Activated CD4-positive, alpha-beta T cell treated with anti-CD3 and anti-CD28 coated beads, Interleukin-2, amount 10 ng/mL, durations not matched to agents 7 days and 5 days (primary cell): ENCODE measurements at regions of chr18 and their contacts with region 1.

Region 1: DNA sequence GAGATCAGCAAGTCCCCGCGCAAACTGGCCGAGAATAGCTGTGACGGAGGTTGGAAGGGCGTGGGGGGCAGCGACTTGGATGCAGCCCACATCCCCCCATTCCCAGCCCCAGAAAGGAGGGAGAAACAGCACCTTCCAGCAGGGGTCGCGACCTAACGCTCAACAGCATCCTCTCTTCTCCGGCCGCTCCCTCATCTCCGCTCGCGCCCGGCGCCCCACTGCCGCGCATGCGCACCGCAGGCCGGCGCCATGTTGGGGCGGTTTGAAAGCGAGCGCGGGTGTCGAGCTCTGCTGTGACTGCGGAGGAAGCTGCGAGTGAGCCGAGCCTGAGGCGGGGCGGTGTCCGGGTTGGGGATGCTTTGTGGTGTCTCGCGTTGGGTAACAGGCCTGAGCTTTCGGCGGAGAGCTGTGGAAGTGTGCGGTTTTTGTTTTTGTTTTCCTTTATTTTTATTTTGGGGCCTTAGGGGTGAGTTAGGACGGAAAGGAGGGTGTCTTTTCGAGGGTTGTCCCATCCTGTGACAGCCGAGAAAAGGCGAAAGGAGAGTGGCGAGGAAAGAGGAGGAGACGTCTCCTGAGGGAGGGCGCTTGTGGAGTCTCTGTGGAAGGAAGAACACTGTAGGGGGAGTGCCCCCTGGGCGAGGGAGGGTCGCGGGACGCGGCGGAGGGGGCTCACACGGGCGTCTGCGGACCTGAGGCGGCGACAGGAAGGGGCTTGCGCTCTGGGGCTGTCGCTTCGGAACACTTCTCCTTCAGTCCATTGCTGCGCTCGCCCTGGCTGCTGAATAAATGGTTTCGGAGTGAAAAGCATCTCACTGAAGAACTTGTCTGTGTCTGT is at the starts of genes C18orf54 and STARD6:
- DNase-seq: peak; percentile 91
- H3K4me3 Mint-ChIP-seq: peak within 1 kb of the TSS; percentile 93
- H3K27ac Mint-ChIP-seq: peak within 1 kb of the TSS; percentile 100
- H3K4me1 Mint-ChIP-seq: peaks cover 28% of the 10 kb centered on the region
- H3K27me3 Mint-ChIP-seq: peaks cover 2% of the 10 kb centered on the region
- total RNA-seq, gene C18orf54: 8.2 to 8.8 TPM
- total RNA-seq, gene STARD6: not detected

Region 2: DNA sequence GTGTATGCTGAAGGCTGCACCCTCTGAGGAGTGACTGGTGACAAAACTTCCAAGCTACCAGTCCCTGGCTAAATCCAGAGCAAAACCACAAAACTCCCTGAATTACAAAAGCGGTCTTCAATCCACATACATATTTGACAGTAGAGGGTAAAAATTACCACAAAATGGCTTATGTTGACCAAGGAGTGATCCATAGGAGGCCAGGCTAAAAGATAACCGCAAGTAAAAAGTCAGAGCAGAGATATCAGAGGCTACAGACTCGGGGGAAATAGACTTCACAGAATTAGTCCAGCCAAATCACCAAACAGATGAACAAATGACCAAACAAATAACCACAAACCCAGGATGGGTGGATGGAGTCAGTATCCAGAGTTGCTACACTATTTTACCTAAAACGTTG is 19.6 kb before region 1 on chr18:
- CTCF ChIA-PET with region 1: no interaction called
- POLR2A ChIA-PET with region 1: no interaction called
- DNase-seq: no peak
- H3K4me3 Mint-ChIP-seq: no peak overlapping the region
- H3K27ac Mint-ChIP-seq: no peak overlapping the region
- H3K4me1 Mint-ChIP-seq: no peaks in the 10 kb centered on the region
- H3K27me3 Mint-ChIP-seq: no peaks in the 10 kb centered on the region

Region 3: GRCh38 chr18:54378057-54378456 is 20.2 kb after region 1 on chr18:
- CTCF ChIA-PET with region 1: interaction called, 10 read pairs
- POLR2A ChIA-PET with region 1: no interaction called
- DNase-seq: no peak
- H3K4me3 Mint-ChIP-seq: no peak overlapping the region
- H3K27ac Mint-ChIP-seq: no peak overlapping the region
- H3K4me1 Mint-ChIP-seq: no peaks in the 10 kb centered on the region
- H3K27me3 Mint-ChIP-seq: no peaks in the 10 kb centered on the region

Region 4: GRCh38 chr18:54561706-54562267 is 203.9 kb after region 1 on chr18:
- CTCF ChIA-PET with region 1: no interaction called
- POLR2A ChIA-PET with region 1: no interaction called
- DNase-seq: no peak
- H3K4me3 Mint-ChIP-seq: no peak overlapping the region
- H3K27ac Mint-ChIP-seq: no peak overlapping the region
- H3K4me1 Mint-ChIP-seq: no peaks in the 10 kb centered on the region
- H3K27me3 Mint-ChIP-seq: peaks cover 10% of the 10 kb centered on the region